ENCODE measurements at regions of chr3 and their contacts with region 1.

Region 1: GRCh38 chr3:184874709-184875644 is 63.0 kb downstream of the VPS8 start:
- DNase-seq: peak; percentile 31
- H3K4me3 Mint-ChIP-seq: no peak overlapping the region
- H3K27ac Mint-ChIP-seq: no peak overlapping the region
- H3K4me1 Mint-ChIP-seq: peaks cover 17% of the 10 kb centered on the region
- H3K27me3 Mint-ChIP-seq: no peaks in the 10 kb centered on the region

Region 2: DNA sequence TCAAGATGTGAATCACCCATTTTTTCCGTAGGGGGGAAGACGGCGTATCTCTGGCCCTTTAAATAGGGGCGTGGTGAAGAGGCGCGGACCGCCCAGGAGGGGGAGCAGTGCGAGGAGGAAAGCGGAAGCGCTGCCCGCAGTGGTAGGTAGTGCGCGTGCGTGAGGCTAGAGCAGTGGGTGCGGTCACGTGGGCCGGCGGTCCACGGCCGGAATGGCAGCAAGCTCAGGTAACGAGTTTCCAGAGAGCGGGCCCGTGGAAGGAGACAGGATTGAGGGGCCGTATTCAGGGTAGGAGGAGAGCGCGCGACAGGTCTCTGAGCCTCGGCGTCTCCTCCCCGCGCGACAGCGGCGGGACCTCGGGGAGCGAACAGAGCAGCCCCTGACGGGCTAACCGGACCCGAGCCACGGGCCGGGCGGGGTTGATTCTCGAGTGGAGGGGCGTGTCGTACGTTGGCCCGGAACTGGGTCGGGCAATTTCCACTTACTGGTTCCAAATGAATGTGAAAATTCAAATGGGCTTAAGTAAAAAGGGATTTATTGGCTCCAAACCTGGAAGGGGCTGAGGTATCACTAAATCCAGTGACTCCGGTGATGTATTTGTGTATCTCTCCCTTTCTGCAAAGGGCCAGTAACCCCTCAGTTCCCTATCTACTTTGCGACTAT is 62.8 kb before region 1 on chr3 and contains the start of gene VPS8:
- CTCF ChIA-PET with region 1: no interaction called
- intact Hi-C with region 1: loop called (anchors 1 kb)
- DNase-seq: peak; percentile 97
- H3K4me3 Mint-ChIP-seq: peak within 1 kb of the TSS; percentile 92
- H3K27ac Mint-ChIP-seq: peak within 1 kb of the TSS; percentile 85
- H3K4me1 Mint-ChIP-seq: peaks cover 48% of the 10 kb centered on the region
- H3K27me3 Mint-ChIP-seq: no peaks in the 10 kb centered on the region
- total RNA-seq, gene VPS8: 32.7 to 33.7 TPM

Region 3: GRCh38 chr3:185176750-185177359 is 301.9 kb after region 1 on chr3:
- CTCF ChIA-PET with region 1: interaction called, 5 read pairs
- intact Hi-C with region 1: loop called (anchors 1 kb)
- DNase-seq: peak; percentile 58
- H3K4me3 Mint-ChIP-seq: no peak overlapping the region
- H3K27ac Mint-ChIP-seq: no peak overlapping the region
- H3K4me1 Mint-ChIP-seq: no peaks in the 10 kb centered on the region
- H3K27me3 Mint-ChIP-seq: peaks cover 6% of the 10 kb centered on the region

Region 4: GRCh38 chr3:185215873-185216606 is 341.1 kb after region 1 on chr3:
- CTCF ChIA-PET with region 1: interaction called, 3 read pairs
- intact Hi-C with region 1: loop called (anchors 1 kb)
- DNase-seq: no peak
- H3K4me3 Mint-ChIP-seq: no peak overlapping the region
- H3K27ac Mint-ChIP-seq: no peak overlapping the region
- H3K4me1 Mint-ChIP-seq: no peaks in the 10 kb centered on the region
- H3K27me3 Mint-ChIP-seq: no peaks in the 10 kb centered on the region

Region 5: GRCh38 chr3:185282696-185283394 is 407.9 kb after region 1 on chr3:
- CTCF ChIA-PET with region 1: no interaction called
- intact Hi-C with region 1: loop called (anchors 5 kb)
- DNase-seq: peak; percentile 98
- H3K4me3 Mint-ChIP-seq: peak overlapping the region; percentile 99
- H3K27ac Mint-ChIP-seq: peak overlapping the region; percentile 77
- H3K4me1 Mint-ChIP-seq: peaks cover 23% of the 10 kb centered on the region
- H3K27me3 Mint-ChIP-seq: peaks cover 18% of the 10 kb centered on the region

Region 6: GRCh38 chr3:185308126-185308754 is 433.3 kb after region 1 on chr3:
- CTCF ChIA-PET with region 1: no interaction called
- intact Hi-C with region 1: loop called (anchors 1 kb)
- DNase-seq: peak; percentile 74
- H3K4me3 Mint-ChIP-seq: no peak overlapping the region
- H3K27ac Mint-ChIP-seq: no peak overlapping the region
- H3K4me1 Mint-ChIP-seq: no peaks in the 10 kb centered on the region
- H3K27me3 Mint-ChIP-seq: no peaks in the 10 kb centered on the region